ENCODE measurements at regions of chr6 and their contacts with region 1.

Region 1: GRCh38 chr6:30500421-30501355 is 11.4 kb downstream of the HLA-E start:
- DNase-seq: no peak
- ATAC-seq: peak; percentile 67 to 81
- H3K4me3 Mint-ChIP-seq: peak overlapping the region; percentile 73 to 89 (median 82)
- H3K27ac Mint-ChIP-seq: peak overlapping the region in 9 of 10 donors; percentile 73 to 91 (median 89)
- H3K4me1 Mint-ChIP-seq: peaks cover 28 to 53% (median 47%) of the 10 kb centered on the region in 4 donors
- H3K27me3 Mint-ChIP-seq: no peaks in the 10 kb centered on the region

Region 2: DNA sequence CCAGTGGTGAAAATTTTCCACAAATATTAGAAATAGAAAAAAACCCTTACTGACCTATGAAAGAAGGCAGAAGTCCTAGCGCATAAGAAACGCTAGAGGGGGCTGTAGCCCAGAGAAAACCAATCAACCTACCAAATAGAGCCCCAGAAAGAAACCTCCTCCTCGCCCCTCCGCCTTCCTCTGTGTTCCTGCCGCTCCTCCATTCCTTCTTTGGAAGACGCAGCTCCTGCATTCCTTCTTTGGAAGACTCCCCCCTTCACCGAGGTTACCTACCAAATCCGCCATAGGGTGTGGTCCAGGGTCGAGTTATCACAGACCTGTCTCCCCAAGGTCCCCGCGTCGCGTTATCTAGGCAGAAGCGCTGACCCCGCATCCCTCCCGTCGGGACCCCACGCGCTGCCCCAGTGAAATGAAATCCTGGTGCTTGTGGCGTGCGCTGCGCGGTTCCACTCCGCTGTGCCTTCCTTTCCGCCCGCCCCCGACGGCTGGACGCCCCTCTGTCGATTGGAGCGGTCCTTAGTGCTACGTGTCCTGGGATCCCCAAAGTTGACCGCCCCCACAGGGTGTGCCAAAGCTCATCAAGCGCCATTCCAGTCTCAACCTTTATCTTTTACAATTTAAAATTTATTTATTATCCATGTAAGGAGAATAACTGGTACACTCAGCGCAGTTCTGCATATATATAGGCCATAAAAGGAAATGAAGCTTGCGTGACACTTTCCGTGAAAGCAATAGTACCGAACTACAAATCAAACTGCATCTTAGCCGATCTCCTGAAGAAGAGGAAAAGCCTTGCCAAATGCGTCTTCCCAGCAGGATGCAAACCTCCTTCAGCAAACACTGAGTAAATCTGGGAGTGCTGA is 142.8 kb before region 1 on chr6:
- POLR2A ChIA-PET with region 1: no interaction called
- DNase-seq: peak; percentile 29 to 75 (median 54)
- ATAC-seq: peak; percentile 88 to 95
- H3K4me3 Mint-ChIP-seq: peak overlapping the region; percentile 78 to 90 (median 87)
- H3K27ac Mint-ChIP-seq: peak overlapping the region in 1 of 10 donors; percentile 65
- H3K4me1 Mint-ChIP-seq: peaks cover 6 to 11% (median 6%) of the 10 kb centered on the region in 4 donors
- H3K27me3 Mint-ChIP-seq: peaks cover 33 to 60% (median 41%) of the 10 kb centered on the region in 5 donors

Region 3: GRCh38 chr6:30515932-30516753 is 15.5 kb after region 1 on chr6:
- POLR2A ChIA-PET with region 1: interaction called, 540 read pairs
- DNase-seq: peak; percentile 71 to 97 (median 91)
- ATAC-seq: peak; percentile 84 to 85
- H3K4me3 Mint-ChIP-seq: peak overlapping the region; percentile 70 to 94 (median 90)
- H3K27ac Mint-ChIP-seq: peak overlapping the region; percentile 96 to 100 (median 99)
- H3K4me1 Mint-ChIP-seq: peaks cover 18 to 80% (median 66%) of the 10 kb centered on the region in 4 donors
- H3K27me3 Mint-ChIP-seq: no peaks in the 10 kb centered on the region

Region 4: GRCh38 chr6:31037682-31038081 is 537.0 kb after region 1 on chr6:
- POLR2A ChIA-PET with region 1: no interaction called
- DNase-seq: no peak
- ATAC-seq: no peak
- H3K4me3 Mint-ChIP-seq: no peak overlapping the region
- H3K27ac Mint-ChIP-seq: no peak overlapping the region
- H3K4me1 Mint-ChIP-seq: peaks cover 0 to 1% (median 0%) of the 10 kb centered on the region in 4 donors
- H3K27me3 Mint-ChIP-seq: peaks cover 3 to 13% (median 9%) of the 10 kb centered on the region in 5 donors